ENCODE measurements at regions of chr1 and their contacts with region 1.

Region 1: DNA sequence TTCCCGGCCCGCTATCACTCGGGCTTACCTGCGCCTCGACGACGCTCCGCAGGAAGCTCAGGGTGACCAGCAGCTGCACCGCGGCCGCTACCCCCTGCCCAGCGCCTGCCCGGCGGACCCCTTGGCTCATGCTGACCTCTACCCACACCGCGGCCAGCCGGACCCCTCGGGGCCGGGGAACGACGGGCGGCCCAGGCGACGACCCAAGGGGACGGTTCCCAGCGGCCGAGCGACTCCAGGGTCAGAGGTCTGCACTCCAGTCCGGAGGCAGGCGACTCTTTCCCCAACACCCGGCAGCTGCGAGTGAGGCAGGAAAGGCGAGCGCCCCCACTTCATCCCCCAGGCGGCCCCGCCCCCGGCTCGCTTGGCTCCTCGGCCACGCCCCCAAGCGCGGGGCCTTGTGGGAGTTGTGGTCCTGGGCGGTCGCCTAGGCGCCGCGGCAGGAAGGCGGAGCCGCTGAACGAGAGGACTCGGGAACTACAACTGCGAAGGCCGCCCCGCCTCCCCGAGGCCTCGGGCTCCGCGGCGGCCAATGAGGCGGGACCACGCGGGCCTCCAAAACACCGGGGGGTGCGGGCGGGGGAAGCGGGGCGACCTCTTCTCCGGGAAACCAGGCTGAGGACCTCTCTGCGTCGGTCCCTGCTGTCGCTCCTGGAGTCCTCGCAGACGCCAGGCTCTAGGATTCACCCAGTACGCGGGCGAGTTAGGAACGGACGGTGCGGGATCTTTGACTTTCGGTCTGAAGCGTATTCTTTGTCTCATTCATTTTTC is at the start of gene ERO1B:
- DNase-seq: peak; percentile 98
- H3K4me3 Mint-ChIP-seq: peak within 1 kb of the TSS; percentile 90
- H3K27ac Mint-ChIP-seq: peak within 1 kb of the TSS; percentile 80
- H3K4me1 Mint-ChIP-seq: peaks cover 45% of the 10 kb centered on the region
- H3K27me3 Mint-ChIP-seq: peaks cover 12% of the 10 kb centered on the region
- total RNA-seq, gene ERO1B: 2.1 and 2.4 TPM in 2 replicates

Region 2: DNA sequence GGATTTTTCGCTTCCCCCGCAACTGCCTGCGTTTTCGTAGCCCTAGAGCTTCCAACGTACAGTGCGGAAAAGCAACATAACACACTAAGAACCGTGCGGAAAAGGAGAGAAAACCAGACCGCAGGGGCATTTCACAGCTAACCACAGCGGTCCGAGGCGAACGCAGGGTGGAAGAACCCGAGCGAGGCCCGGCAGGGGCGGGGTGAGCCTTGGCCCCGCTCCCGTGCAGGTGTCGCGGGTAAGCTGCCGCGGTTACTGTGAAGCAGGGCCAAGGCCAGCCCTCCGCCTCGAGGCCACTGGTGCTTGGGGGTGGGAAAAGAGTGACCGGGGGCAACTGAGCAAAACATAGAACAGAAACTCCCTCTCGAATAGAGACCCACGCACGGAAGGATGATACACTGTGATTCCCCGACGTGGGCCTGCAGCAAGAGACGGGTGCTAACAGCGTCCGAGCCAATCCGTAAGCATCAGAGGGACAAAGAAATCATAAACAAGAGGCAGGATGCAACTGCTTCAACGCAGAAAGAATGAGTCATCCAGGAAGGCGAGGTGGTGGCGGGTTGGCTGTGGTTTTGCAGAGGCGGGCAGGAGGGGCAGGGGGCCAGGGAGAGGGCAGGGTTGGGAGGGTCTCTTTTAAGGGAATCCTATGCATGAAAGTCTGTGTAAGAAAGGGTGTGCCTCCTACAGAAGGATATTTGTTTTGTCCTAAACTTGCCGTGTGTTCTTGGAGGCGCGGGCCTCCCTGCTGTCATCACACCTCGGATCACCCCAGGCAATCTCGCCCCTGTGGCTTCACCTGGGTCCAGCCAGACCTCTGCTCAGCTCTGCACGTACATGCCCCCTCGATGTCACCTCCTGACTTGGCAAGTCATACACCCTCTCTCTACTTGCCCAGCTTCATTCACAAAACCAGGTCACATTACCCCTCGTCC is 639.6 kb before region 1 on chr1:
- intact Hi-C with region 1: loop called (anchors 5 kb)
- DNase-seq: peak; percentile 76
- H3K4me3 Mint-ChIP-seq: peak overlapping the region; percentile 67
- H3K27ac Mint-ChIP-seq: peak overlapping the region; percentile 92
- H3K4me1 Mint-ChIP-seq: peaks cover 71% of the 10 kb centered on the region
- H3K27me3 Mint-ChIP-seq: peaks cover 17% of the 10 kb centered on the region

Region 3: DNA sequence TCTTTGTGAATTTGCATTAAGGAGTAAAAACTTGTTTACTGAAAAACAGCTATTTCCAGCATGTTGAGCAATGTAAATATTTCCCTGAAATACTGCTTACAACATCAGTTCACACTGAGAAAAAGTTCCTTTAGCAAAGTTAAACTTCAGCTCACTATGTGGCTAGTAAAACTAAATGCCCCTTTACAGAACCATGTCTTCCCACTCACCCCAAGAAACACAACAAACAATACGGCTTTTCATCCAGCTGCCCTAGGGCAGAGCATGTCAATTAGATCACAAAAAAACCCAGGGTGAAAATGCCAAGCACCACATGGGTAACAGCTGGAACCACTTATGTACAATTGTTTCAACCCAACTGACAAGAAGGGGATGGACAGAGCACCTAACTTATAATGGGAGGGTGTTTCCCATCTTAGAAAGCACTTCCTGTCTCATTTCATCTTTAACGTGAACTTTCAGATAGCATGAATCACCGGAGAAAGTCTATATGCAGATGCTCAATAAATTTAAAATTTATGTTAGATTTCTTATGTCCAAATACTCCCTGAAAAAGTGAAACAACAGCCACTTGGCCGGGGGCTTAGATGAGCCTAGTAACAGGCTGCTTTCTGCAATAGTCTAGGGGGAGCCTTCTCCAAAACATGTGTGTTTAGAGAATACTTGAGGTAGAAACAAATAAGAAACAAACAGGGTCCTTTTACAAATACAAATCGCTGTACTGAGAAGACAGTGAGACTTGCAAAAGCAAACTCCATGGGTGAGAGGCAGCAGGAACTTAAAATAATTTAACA is 223.5 kb before region 1 on chr1:
- intact Hi-C with region 1: no loop called
- DNase-seq: no peak
- H3K4me3 Mint-ChIP-seq: no peak overlapping the region
- H3K27ac Mint-ChIP-seq: no peak overlapping the region
- H3K4me1 Mint-ChIP-seq: peaks cover 12% of the 10 kb centered on the region
- H3K27me3 Mint-ChIP-seq: peaks cover 31% of the 10 kb centered on the region

Region 4: GRCh38 chr1:236120721-236121153 is 161.1 kb before region 1 on chr1:
- intact Hi-C with region 1: loop called (anchors 1 kb)
- DNase-seq: no peak
- H3K4me3 Mint-ChIP-seq: peak overlapping the region; percentile 57
- H3K27ac Mint-ChIP-seq: peak overlapping the region; percentile 36
- H3K4me1 Mint-ChIP-seq: peaks cover 28% of the 10 kb centered on the region
- H3K27me3 Mint-ChIP-seq: peaks cover 15% of the 10 kb centered on the region

Region 5: DNA sequence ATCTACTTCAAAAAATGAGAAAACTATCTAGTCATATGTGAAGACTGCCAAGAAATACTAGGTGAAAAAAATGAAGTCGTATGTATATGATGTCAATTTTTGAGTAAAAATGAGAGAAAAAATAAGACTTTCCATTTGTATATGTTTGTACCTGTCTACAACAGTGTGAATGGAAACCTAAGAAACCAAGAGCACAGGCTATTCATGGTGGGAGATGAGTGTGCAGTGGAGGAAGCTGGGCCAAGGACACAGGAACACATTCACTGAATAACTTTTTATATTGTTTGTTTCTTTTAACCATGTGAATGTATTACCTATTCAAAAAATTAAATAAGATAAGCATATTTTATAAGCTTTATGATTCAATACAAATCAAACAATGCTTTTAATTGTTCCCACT is 67.1 kb before region 1 on chr1:
- intact Hi-C with region 1: loop called (anchors 1 kb)
- DNase-seq: no peak
- H3K4me3 Mint-ChIP-seq: no peak overlapping the region
- H3K27ac Mint-ChIP-seq: no peak overlapping the region
- H3K4me1 Mint-ChIP-seq: no peaks in the 10 kb centered on the region
- H3K27me3 Mint-ChIP-seq: no peaks in the 10 kb centered on the region

Region 6: DNA sequence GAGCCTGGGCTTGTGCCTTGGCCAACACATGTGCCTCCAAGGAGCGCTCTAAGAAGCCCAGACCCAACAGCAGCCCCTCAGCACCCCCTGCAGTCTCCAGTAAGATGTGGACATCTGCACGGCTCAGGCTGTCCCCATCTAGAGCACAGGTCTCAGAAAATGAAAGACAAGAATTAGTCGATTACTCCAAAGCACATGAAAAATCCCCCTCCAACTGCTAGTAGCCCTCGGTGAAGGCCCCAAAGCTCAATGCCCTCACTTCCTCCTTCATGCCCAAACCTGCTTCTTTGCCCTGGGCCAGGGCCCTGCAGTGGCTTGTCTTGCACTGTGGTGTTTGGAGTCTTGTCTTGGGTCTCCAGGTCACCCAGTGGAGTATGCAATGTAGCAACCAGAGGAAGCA is 21.8 kb after region 1 on chr1:
- intact Hi-C with region 1: no loop called
- DNase-seq: no peak
- H3K4me3 Mint-ChIP-seq: no peak overlapping the region
- H3K27ac Mint-ChIP-seq: no peak overlapping the region
- H3K4me1 Mint-ChIP-seq: no peaks in the 10 kb centered on the region
- H3K27me3 Mint-ChIP-seq: no peaks in the 10 kb centered on the region

Region 7: GRCh38 chr1:236795035-236795756 is 513.4 kb after region 1 on chr1 and contains the start of gene MTR:
- intact Hi-C with region 1: loop called (anchors 2 kb)
- DNase-seq: peak; percentile 94
- H3K4me3 Mint-ChIP-seq: peak within 1 kb of the TSS; percentile 89
- H3K27ac Mint-ChIP-seq: peak within 1 kb of the TSS; percentile 96
- H3K4me1 Mint-ChIP-seq: peaks cover 37% of the 10 kb centered on the region
- H3K27me3 Mint-ChIP-seq: peaks cover 13% of the 10 kb centered on the region
- total RNA-seq, gene MTR: 48.9 and 49.2 TPM in 2 replicates